G401 (cell line): ENCODE measurements at regions of chr13 and their contacts with region 1.

Region 1: GRCh38 chr13:48892053-48892690 is 83.5 kb upstream of the FNDC3A start:
- DNase-seq: no peak

Region 2: DNA sequence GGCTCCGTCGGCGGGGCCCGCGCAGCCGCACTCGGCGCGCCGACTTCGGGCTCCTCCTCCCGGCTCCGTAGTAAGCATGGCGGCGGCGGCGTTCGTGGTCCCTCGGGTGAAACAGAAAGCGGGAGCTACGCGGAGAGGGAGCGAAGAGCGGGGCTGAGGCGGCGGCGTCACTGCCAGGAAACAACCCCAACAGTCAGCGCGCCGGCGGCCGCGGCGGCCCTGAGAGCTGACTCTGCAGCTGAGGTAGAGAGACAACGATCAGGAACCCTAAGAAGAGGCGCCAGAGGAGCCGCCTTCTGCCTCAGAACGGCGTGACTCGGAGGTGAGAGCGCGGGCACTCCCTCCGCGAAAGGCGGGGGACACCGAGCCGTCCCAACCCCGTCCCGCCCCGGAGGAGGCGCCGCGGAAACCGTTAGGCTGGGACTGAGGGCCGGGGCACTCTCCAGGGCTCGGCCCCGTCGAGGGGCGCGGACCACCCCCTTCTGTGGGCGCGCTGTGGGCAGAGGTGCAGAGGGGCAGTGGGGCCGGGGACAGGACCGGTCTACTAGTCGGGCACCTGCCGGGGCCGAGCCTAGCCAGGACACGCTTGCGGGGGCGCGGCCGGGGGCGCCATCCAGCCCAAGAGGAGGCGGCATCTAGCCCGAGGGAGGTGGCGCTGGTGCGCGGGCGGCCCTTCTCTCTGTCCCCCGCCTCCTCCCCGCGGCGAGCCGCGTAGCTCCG is 83.8 kb after region 1 on chr13 and contains the start of gene FNDC3A:
- in situ Hi-C with region 1: loop called (anchors 10 kb)
- DNase-seq: peak; percentile 71
- total RNA-seq, gene FNDC3A: 25.4 and 38.4 TPM in 2 replicates